ENCODE measurements at regions of chr1 and their contacts with region 1.

Region 1: DNA sequence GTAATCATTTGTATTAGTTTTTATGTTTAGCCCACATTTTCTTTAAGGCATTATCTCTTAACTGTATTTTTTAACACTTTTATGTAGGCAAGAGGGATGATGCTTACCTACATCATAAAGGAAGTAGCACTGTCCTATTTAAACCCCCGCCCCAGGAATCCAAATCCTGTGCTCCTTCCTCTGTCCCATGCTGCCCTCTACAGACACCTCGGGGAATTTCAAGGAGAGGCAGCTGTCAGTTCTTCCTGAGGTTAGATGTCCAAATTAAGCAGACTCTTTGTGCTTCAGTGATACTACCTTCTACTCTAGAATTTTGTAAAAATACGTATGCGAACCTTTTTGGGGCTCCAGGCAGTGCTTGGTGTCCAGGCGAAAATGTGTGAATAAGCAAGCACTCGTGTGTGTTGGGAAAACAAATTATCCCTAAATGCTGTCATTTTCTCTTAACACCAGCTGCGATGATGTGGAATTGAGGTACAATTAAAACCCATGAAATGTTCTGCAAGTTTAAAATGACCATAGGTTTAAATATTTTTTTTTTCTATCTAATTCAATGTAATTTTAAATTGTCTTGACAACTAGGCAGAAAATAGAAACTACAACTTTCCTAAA is 19.2 kb downstream of the CRCT1 start:
- DNase-seq: peak; percentile 22 to 51 (median 39)
- H3K4me3 ChIP-seq: no peak overlapping the region
- H3K4me3 Mint-ChIP-seq: no peak overlapping the region
- H3K27ac ChIP-seq: no peak overlapping the region
- H3K27ac Mint-ChIP-seq: no peak overlapping the region
- H3K4me1 ChIP-seq: no peaks in the 10 kb centered on the region
- H3K4me1 Mint-ChIP-seq: no peaks in the 10 kb centered on the region
- H3K27me3 ChIP-seq: peaks cover 0 to 2% of the 10 kb centered on the region in 2 donors
- H3K27me3 Mint-ChIP-seq: peaks cover 3 to 9% (median 8%) of the 10 kb centered on the region in 3 donors
- CTCF ChIP-seq: peak; percentile 80

Region 2: DNA sequence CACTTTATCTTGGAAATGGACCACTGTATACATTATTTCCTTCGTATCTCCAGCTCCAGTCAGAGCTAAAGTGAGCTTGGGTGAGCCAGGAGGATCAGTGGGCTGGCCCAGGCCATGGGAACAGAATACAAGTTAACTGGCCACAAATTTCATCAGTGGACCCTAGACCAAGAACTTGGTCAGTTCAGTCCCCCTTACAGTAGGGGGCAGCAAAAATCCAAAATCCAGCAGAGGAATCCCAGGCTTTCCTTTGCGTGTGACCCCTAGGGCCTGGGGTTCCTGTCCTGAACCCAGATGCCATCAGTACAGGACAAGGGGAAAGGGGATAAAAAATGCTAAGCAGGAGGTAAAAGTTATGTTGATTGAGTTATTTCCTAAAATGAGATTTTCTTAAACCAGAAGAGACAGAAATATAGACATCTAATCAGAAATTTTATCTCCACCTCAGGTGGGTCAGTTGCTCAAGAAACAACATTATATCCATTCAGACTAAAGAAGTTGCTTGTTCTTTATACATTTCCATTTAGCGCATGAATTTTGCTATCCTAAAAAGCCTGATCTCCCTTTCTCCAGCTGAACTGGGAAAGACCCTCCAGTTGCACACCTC is 46.9 kb before region 1 on chr1:
- intact Hi-C with region 1: loop called in 1 of 2 experiments (anchors 5 kb)
- DNase-seq: peak in 2 of 3 donors; percentile 8 to 14
- H3K4me3 ChIP-seq: no peak overlapping the region
- H3K4me3 Mint-ChIP-seq: no peak overlapping the region
- H3K27ac ChIP-seq: no peak overlapping the region
- H3K27ac Mint-ChIP-seq: no peak overlapping the region
- H3K4me1 ChIP-seq: no peaks in the 10 kb centered on the region
- H3K4me1 Mint-ChIP-seq: peaks cover 2% of the 10 kb centered on the region
- H3K27me3 ChIP-seq: no peaks in the 10 kb centered on the region
- H3K27me3 Mint-ChIP-seq: peaks cover 0 to 6% (median 5%) of the 10 kb centered on the region in 3 donors
- CTCF ChIP-seq: peak; percentile 75

Region 3: GRCh38 chr1:152497273-152497672 is 36.2 kb before region 1 on chr1:
- intact Hi-C with region 1: loop called in 1 of 2 experiments (anchors 2 kb)
- DNase-seq: peak in 1 of 3 donors; percentile 10
- H3K4me3 ChIP-seq: no peak overlapping the region
- H3K4me3 Mint-ChIP-seq: no peak overlapping the region
- H3K27ac ChIP-seq: no peak overlapping the region
- H3K27ac Mint-ChIP-seq: no peak overlapping the region
- H3K4me1 ChIP-seq: no peaks in the 10 kb centered on the region
- H3K4me1 Mint-ChIP-seq: no peaks in the 10 kb centered on the region
- H3K27me3 ChIP-seq: no peaks in the 10 kb centered on the region
- H3K27me3 Mint-ChIP-seq: peaks cover 2 to 4% (median 2%) of the 10 kb centered on the region in 3 donors
- CTCF ChIP-seq: peak; percentile 49

Measured in CD14-positive monocyte (primary cell).